ENCODE measurements at regions of chr11 and their contacts with region 1.

Region 1: DNA sequence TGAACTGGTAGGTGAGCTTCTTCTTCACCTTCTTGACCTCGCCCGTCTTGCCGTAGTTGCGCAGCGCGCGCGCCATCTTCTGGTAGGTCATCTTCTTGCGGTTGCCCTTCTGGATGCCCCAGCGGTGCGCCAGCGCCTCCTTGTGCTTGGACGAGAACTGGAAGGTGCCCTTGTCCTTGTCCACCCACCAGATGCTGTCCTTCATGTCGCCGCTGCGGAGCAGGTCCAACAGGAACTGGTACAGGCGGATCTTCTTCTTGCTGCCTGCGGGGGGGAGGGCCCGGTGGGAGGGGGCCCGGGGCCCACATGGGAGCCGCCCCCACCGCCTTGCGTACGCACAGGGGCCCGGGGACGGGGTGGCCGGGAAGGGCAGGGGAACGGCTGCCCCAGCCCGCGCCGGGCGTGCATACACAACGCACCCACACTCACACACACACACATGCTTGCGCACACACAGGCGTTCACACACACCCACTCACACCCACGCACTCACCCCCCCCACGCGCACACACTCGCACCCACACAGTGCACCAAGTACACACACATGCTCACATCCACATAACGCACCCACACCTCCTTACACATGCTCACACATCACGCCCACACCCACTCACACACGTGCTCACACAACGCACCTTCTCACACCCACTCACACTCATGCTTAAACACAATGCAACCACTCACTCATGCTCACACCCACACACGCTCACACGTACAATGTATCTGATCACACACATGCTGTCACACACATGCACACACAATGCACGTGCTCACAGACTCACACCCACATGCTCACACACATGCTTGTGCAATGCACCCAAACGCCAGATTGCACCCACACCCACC is 3.0 kb upstream of the MYBPC3 start:
- DNase-seq: peak; percentile 88 to 94 (median 92)
- H3K4me3 ChIP-seq: peak overlapping the region; percentile 49 to 80 (median 65)
- H3K27ac ChIP-seq: peak overlapping the region in 40 of 59 donors; percentile 16 to 83 (median 62)
- H3K27me3 ChIP-seq: no peaks in the 10 kb centered on the region
- CTCF ChIP-seq: peak; percentile 36 to 98 (median 90)

Region 2: GRCh38 chr11:47248664-47249377 is 106.7 kb before region 1 on chr11 and contains the start of gene ACP2:
- intact Hi-C with region 1: loop called in 1 of 2 experiments (anchors 10 kb)
- DNase-seq: peak; percentile 85 to 95 (median 93)
- H3K4me3 ChIP-seq: peak within 1 kb of the TSS; percentile 64 to 96 (median 87)
- H3K27ac ChIP-seq: peak within 1 kb of the TSS; percentile 32 to 97 (median 91)
- H3K27me3 ChIP-seq: no peaks in the 10 kb centered on the region
- CTCF ChIP-seq: peak in 49 of 56 donors; percentile 7 to 71 (median 42)
- total RNA-seq, gene ACP2: 23.3 to 58.3 (median 37.1) TPM